Activated naive CD4-positive, alpha-beta T cell treated with anti-CD3 and anti-CD28 coated beads, Interleukin-2, amount 10 ng/mL, durations not matched to agents 7 days and 5 days (primary cell): ENCODE measurements at regions of chr2 and their contacts with region 1.

Region 1: DNA sequence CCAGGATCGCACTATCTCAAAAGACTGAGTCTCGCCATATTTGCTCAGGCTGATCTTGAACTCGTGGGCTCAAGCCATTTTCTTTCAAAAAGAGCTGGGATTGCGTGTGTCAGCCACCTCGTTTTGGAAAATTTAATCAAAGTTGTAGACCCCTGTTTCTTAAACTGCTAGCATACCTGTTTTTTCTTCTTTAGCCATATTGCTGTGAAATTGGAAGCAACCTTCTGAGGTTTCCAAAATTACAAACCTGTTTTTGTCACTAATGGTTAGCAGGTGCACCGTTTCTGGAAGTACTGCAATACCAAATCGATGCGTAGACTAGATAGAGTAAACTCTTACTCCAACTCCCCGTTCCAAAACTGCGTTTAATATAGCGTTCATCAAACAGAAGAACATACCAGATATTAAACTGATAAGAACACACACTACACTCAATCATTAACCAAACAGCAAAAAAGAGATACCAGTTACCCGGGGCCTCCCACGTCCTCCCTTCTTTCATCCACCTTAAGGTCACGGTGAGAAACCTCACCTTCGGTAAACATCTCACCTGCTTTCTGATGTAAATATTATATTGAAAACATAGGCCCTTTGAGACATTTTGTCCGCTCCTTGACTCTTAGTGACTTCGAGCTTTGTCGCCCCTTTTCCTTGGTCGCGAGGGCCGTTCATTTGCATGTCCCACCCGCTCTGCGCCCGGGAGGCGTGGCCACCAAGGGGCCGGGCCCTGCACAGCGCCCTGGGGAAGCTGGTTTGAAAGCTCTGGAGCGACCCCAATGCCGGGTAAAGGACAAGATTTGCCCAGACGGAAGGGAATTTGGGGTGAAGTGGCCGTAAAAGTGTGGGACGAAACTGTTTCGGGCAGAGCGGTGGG is at the start of gene RNU2-63P:
- DNase-seq: peak; percentile 85
- H3K4me3 Mint-ChIP-seq: peak within 1 kb of the TSS; percentile 92
- H3K27ac Mint-ChIP-seq: peak within 1 kb of the TSS; percentile 97
- H3K4me1 Mint-ChIP-seq: peaks cover 28% of the 10 kb centered on the region
- H3K27me3 Mint-ChIP-seq: peaks cover 7% of the 10 kb centered on the region

Region 2: GRCh38 chr2:88003074-88003755 is 13.1 kb before region 1 on chr2:
- CTCF ChIA-PET with region 1: interaction called, 16 read pairs
- DNase-seq: no peak
- H3K4me3 Mint-ChIP-seq: no peak overlapping the region
- H3K27ac Mint-ChIP-seq: no peak overlapping the region
- H3K4me1 Mint-ChIP-seq: peaks cover 6% of the 10 kb centered on the region
- H3K27me3 Mint-ChIP-seq: peaks cover 17% of the 10 kb centered on the region